HCT116 (cell line): ENCODE measurements at regions of chr19 and their contacts with region 1.

Region 1: DNA sequence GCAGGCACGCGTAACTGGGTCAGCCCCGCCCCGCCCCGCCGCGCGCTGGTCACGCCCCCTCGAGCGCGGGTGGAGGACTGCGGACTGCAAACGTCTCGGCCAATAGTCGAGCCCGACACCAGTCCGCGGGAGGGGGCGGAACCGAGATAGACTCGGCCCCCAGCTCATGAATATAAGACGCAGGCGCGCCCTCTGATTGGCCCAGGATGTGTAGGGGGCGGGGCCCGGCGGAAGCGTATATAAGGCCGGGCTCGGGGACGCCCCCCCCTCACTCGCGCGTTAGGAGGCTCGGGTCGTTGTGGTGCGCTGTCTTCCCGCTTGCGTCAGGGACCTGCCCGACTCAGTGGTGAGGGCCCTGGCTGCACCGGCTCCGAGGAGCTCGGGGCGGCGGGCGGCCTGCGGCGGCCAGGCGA is at the start of gene CIRBP:
- DNase-seq: peak; percentile 97
- ATAC-seq: peak; percentile 69
- H3K4me3 ChIP-seq: peak within 1 kb of the TSS; percentile 85 to 96
- H3K27ac ChIP-seq: peak within 1 kb of the TSS; percentile 100
- H3K4me1 ChIP-seq: peaks cover 44 to 81% of the 10 kb centered on the region in 2 experiments
- H3K27me3 ChIP-seq: no peaks in the 10 kb centered on the region
- CTCF ChIP-seq: no peak
- POLR2A ChIP-seq: peak; percentile 97
- RAD21 ChIP-seq: no peak
- total RNA-seq, gene CIRBP: 276 TPM

Region 2: DNA sequence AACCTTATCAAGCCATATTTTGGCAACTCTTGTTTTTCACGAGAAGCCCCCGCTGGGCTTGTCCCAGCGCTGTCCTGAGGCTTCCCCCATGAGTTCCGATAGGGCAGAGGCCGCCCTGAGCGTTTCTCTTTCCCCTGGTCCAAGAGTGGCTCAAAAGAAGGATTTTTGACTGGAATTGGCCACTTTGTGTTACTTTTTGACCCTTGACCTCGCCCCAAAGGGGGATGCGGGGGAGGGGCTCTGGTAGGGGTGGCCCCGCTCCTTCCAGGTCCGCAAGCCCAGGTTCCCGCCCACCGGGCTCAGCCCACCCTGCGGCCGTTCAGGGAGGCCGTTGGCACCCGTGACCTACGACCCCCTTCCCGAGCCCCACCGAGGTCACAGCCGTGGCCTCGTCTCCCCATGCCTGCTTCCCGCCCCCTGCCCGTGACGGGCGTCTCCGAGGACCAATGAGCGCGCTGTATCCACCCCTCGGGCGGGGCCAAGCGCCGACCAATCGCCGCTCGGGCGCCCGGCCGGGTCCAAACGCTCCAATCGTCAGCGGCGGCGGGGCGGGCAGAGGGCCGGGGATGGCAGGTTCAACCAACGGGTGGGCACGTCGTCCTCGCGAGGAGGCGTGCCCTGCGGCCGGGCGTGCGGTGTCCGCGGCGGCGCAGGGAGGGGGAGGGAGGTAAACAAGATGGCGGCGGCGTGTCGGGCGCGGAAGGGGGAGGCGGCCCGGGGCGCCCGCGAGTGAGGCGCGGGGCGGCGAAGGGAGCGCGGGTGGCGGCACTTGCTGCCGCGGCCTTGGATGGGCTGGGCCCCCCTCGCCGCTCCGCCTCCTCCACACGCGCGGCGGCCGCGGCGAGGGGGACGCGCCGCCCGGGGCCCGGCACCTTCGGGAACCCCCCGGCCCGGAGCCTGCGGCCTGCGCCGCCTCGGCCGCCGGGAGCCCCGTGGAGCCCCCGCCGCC is 63.7 kb before region 1 on chr19 and contains the start of gene STK11:
- CTCF ChIA-PET with region 1: no interaction called
- POLR2A ChIA-PET with region 1: interaction called, 10 read pairs
- RAD21 ChIA-PET with region 1: no interaction called
- intact Hi-C with region 1: no loop called
- DNase-seq: peak; percentile 89
- ATAC-seq: peak; percentile 98
- H3K4me3 ChIP-seq: peak within 1 kb of the TSS; percentile 82
- H3K27ac ChIP-seq: peak within 1 kb of the TSS; percentile 94
- H3K4me1 ChIP-seq: peaks cover 38 to 47% of the 10 kb centered on the region in 2 experiments
- H3K27me3 ChIP-seq: no peaks in the 10 kb centered on the region
- CTCF ChIP-seq: no peak
- POLR2A ChIP-seq: no peak
- RAD21 ChIP-seq: no peak
- total RNA-seq, gene STK11: 86.9 TPM

Region 3: GRCh38 chr19:1249298-1249989 is 19.6 kb before region 1 on chr19:
- CTCF ChIA-PET with region 1: interaction called, 325 read pairs
- POLR2A ChIA-PET with region 1: interaction called, 139 read pairs
- RAD21 ChIA-PET with region 1: interaction called, 45 to 51 read pairs
- intact Hi-C with region 1: loop called (anchors 1 kb)
- DNase-seq: peak; percentile 89
- ATAC-seq: peak; percentile 45
- H3K4me3 ChIP-seq: peak overlapping the region; percentile 68 to 74
- H3K27ac ChIP-seq: peak overlapping the region; percentile 100
- H3K4me1 ChIP-seq: peaks cover 45 to 74% of the 10 kb centered on the region in 2 experiments
- H3K27me3 ChIP-seq: no peaks in the 10 kb centered on the region
- CTCF ChIP-seq: no peak
- POLR2A ChIP-seq: peak; percentile 43
- RAD21 ChIP-seq: no peak

Region 4: GRCh38 chr19:1312767-1313694 is 44.0 kb after region 1 on chr19:
- CTCF ChIA-PET with region 1: no interaction called
- POLR2A ChIA-PET with region 1: interaction called, 11 read pairs
- RAD21 ChIA-PET with region 1: no interaction called
- intact Hi-C with region 1: no loop called
- DNase-seq: peak; percentile 23
- ATAC-seq: peak; percentile 70
- H3K4me3 ChIP-seq: peak overlapping the region in 1 of 2 experiments; percentile 30; a peak in 2 of 4 replicates
- H3K27ac ChIP-seq: 0 out of 2 replicates have a peak overlapping the region, but pooled peaks have one; percentile 13
- H3K4me1 ChIP-seq: peaks cover 12 to 38% of the 10 kb centered on the region in 2 experiments
- H3K27me3 ChIP-seq: 0 out of 2 replicates have a peak, but pooled peaks cover 4% of the 10 kb centered on the region
- CTCF ChIP-seq: no peak
- POLR2A ChIP-seq: no peak
- RAD21 ChIP-seq: no peak

Region 5: GRCh38 chr19:1429750-1430149 is 160.7 kb after region 1 on chr19:
- CTCF ChIA-PET with region 1: no interaction called
- POLR2A ChIA-PET with region 1: no interaction called
- RAD21 ChIA-PET with region 1: no interaction called
- intact Hi-C with region 1: no loop called
- DNase-seq: no peak
- ATAC-seq: 0 out of 2 replicates have a peak, but pooled peaks have one; percentile 10
- H3K4me3 ChIP-seq: no peak overlapping the region
- H3K27ac ChIP-seq: no peak overlapping the region
- H3K4me1 ChIP-seq: no peaks in the 10 kb centered on the region
- H3K27me3 ChIP-seq: no peaks in the 10 kb centered on the region
- CTCF ChIP-seq: no peak
- POLR2A ChIP-seq: no peak
- RAD21 ChIP-seq: no peak

Region 6: DNA sequence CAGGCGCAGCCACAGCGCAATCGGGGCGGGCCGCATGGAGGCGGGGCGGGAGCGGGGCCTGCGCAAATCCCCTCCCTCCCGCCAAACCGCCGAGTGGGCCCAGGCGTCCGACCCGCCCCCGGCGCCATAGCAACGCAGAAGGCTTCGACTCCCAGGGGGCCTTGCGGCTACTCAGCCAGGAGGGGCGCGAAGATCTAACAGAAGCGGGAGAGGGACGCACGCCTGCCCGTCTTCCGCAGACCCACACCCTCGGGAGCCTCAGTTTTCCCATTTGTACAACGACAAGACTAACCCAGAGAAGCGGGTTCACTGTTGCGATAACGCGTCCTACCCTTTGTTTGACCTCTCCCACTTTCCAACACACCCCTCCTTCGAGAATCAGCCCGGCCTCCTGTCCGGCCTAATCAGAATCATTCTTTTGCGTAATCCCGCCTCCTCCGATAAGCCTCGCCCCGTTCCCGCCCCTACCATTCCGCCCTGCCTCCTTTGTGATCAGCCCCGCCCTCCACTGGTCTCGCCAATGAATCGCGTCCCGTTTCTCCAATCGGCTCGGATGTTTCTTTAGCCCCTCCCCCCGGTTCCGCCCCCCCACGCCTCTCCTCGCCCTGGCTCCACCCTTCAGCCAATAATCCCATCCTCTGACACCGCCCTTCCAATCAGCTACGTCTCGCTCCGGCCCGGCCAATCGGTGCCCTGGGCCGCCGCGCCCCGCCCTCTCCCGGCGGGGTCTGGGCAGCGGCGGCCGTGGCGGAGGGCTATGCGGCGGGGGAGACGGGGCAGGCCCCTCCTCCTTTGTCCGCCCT is 221.4 kb after region 1 on chr19 and contains the start of gene PCSK4:
- CTCF ChIA-PET with region 1: interaction called, 5 read pairs
- POLR2A ChIA-PET with region 1: interaction called, 10 read pairs
- RAD21 ChIA-PET with region 1: no interaction called
- intact Hi-C with region 1: no loop called
- DNase-seq: peak; percentile 98
- ATAC-seq: peak; percentile 91
- H3K4me3 ChIP-seq: peak within 1 kb of the TSS; percentile 78 to 85
- H3K27ac ChIP-seq: peak within 1 kb of the TSS; percentile 78
- H3K4me1 ChIP-seq: peaks cover 19 to 33% of the 10 kb centered on the region in 2 experiments
- H3K27me3 ChIP-seq: no peaks in the 10 kb centered on the region
- CTCF ChIP-seq: no peak
- POLR2A ChIP-seq: peak; percentile 40
- RAD21 ChIP-seq: no peak
- total RNA-seq, gene PCSK4: 11.1 TPM